Ascending aorta (tissue), 2 donors: ENCODE measurements at regions of chr12 and their contacts with region 1.

Region 1: GRCh38 chr12:106090591-106091411 is 48.0 kb downstream of the NUAK1 start:
- DNase-seq: peak; percentile 77 to 93
- H3K4me3 ChIP-seq: peak overlapping the region in 1 of 2 donors; percentile 15
- H3K27ac ChIP-seq: peak overlapping the region; percentile 87 to 92
- H3K4me1 ChIP-seq: peaks cover 18 to 65% of the 10 kb centered on the region in 2 donors
- H3K27me3 ChIP-seq: no peaks in the 10 kb centered on the region
- CTCF ChIP-seq: no peak

Region 2: GRCh38 chr12:105948331-105948730 is 142.5 kb before region 1 on chr12:
- intact Hi-C with region 1: loop called (anchors 2 kb)
- DNase-seq: peak in 1 of 2 donors; percentile 78
- H3K4me3 ChIP-seq: no peak overlapping the region
- H3K27ac ChIP-seq: peak overlapping the region; percentile 79 to 86
- H3K4me1 ChIP-seq: peaks cover 6 to 15% of the 10 kb centered on the region in 2 donors
- H3K27me3 ChIP-seq: no peaks in the 10 kb centered on the region
- CTCF ChIP-seq: no peak

Region 3: GRCh38 chr12:106113042-106113441 is 22.2 kb after region 1 on chr12:
- intact Hi-C with region 1: loop called (anchors 2 kb)
- DNase-seq: no peak
- H3K4me3 ChIP-seq: no peak overlapping the region
- H3K27ac ChIP-seq: peak overlapping the region; percentile 91
- H3K4me1 ChIP-seq: peaks cover 23 to 74% of the 10 kb centered on the region in 2 donors
- H3K27me3 ChIP-seq: no peaks in the 10 kb centered on the region
- CTCF ChIP-seq: no peak

Region 4: GRCh38 chr12:106123551-106124081 is 32.8 kb after region 1 on chr12:
- intact Hi-C with region 1: loop called (anchors 1 kb)
- DNase-seq: peak in 1 of 2 donors; percentile 89
- H3K4me3 ChIP-seq: peak overlapping the region; percentile 8 to 49
- H3K27ac ChIP-seq: peak overlapping the region; percentile 75 to 93
- H3K4me1 ChIP-seq: peaks cover 10 to 88% of the 10 kb centered on the region in 2 donors
- H3K27me3 ChIP-seq: no peaks in the 10 kb centered on the region
- CTCF ChIP-seq: no peak

Region 5: GRCh38 chr12:106149096-106149784 is 58.4 kb after region 1 on chr12:
- intact Hi-C with region 1: no loop called
- DNase-seq: no peak
- H3K4me3 ChIP-seq: no peak overlapping the region
- H3K27ac ChIP-seq: peak overlapping the region in 1 of 2 donors; percentile 57
- H3K4me1 ChIP-seq: peaks cover 4 to 21% of the 10 kb centered on the region in 2 donors
- H3K27me3 ChIP-seq: no peaks in the 10 kb centered on the region
- CTCF ChIP-seq: peak; percentile 31 to 62 (median 52)

Region 6: DNA sequence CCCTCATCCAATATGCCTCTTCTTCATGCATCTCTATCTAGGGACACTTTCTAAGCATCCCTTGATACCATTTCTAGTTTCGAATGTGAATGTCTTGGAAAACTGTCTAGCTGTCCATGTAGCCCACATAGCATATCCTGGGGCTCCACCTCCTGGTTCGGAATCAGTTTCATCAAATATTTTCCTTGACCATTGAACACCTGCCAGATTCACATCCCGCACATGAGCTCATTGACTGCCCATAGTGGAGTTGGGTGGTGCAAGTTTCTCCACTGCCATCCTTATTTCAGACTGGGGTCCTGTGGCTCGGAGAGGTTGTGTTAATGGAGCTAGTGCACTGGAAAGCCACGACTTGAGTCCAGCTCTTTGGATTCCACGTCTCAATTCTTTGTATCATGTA is 806.3 kb after region 1 on chr12:
- intact Hi-C with region 1: no loop called
- DNase-seq: no peak
- H3K4me3 ChIP-seq: no peak overlapping the region
- H3K27ac ChIP-seq: no peak overlapping the region
- H3K4me1 ChIP-seq: no peaks in the 10 kb centered on the region
- H3K27me3 ChIP-seq: no peaks in the 10 kb centered on the region
- CTCF ChIP-seq: no peak